ENCODE measurements at regions of chr16 and their contacts with region 1.

Region 1: DNA sequence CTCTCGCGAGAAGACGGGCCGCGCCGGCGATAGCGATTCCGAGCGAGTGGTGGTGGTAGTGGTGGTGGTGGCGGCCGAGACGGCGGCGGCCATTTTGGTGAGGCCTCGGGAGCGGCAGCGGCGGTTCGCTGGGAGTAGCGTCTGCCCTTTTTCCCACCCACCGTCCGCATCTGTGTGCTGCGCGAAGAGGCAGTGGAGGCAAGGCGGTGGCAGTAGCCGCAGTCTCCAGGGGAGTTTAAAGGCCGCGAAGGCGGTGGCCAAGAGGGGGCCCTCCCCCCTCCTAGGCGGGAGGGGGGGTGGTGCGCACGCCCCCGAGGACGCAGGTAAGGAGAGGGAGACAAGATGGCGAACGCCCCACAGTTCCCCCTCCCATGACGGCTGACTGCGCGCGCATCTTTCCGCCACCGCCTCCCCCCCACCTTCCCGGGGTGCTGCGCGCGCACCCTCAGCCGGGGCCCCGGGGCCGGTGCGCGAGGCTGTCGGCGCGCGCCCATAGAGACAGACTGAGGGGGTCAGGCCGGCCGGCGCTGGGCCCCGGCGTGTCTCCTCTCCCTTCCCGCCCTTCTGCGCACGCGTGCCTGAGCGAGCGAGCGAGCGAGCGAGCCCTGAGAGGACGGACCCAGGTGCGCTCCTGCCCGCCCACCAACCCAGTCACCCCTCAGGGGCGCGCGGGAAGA is 694 bp upstream of the SRCAP start:
- DNase-seq: peak; percentile 96
- ATAC-seq: peak; percentile 75
- H3K4me3 Mint-ChIP-seq: peak overlapping the region; percentile 97
- H3K27ac Mint-ChIP-seq: peak overlapping the region; percentile 100
- H3K4me1 Mint-ChIP-seq: peaks cover 30% of the 10 kb centered on the region
- H3K27me3 Mint-ChIP-seq: no peaks in the 10 kb centered on the region
- CTCF ChIP-seq: no peak

Region 2: GRCh38 chr16:30407102-30407803 is 291.0 kb before region 1 on chr16 and contains the start of gene ZNF771:
- CTCF ChIA-PET with region 1: no interaction called
- POLR2A ChIA-PET with region 1: interaction called, 5 read pairs
- intact Hi-C with region 1: loop called (anchors 1 kb)
- DNase-seq: peak; percentile 90
- ATAC-seq: peak; percentile 89
- H3K4me3 Mint-ChIP-seq: peak within 1 kb of the TSS; percentile 89
- H3K27ac Mint-ChIP-seq: peak within 1 kb of the TSS; percentile 90
- H3K4me1 Mint-ChIP-seq: peaks cover 27% of the 10 kb centered on the region
- H3K27me3 Mint-ChIP-seq: no peaks in the 10 kb centered on the region
- CTCF ChIP-seq: no peak
- total RNA-seq, gene ZNF771: 4.4 and 5.2 TPM in 2 replicates

Region 3: GRCh38 chr16:30628627-30629540 is 69.4 kb before region 1 on chr16:
- CTCF ChIA-PET with region 1: interaction called, 8 read pairs
- POLR2A ChIA-PET with region 1: interaction called, 17 read pairs
- intact Hi-C with region 1: loop called (anchors 1 kb)
- DNase-seq: peak; percentile 84
- ATAC-seq: peak; percentile 93
- H3K4me3 Mint-ChIP-seq: peak overlapping the region; percentile 69
- H3K27ac Mint-ChIP-seq: peak overlapping the region; percentile 76
- H3K4me1 Mint-ChIP-seq: peaks cover 6% of the 10 kb centered on the region
- H3K27me3 Mint-ChIP-seq: no peaks in the 10 kb centered on the region
- CTCF ChIP-seq: peak; percentile 70

Region 4: GRCh38 chr16:30715737-30716445 is 17.6 kb after region 1 on chr16:
- CTCF ChIA-PET with region 1: no interaction called
- POLR2A ChIA-PET with region 1: interaction called, 5 read pairs
- intact Hi-C with region 1: loop called (anchors 1 kb)
- DNase-seq: no peak
- ATAC-seq: peak; percentile 99
- H3K4me3 Mint-ChIP-seq: peak overlapping the region; percentile 50
- H3K27ac Mint-ChIP-seq: peak overlapping the region; percentile 91
- H3K4me1 Mint-ChIP-seq: peaks cover 26% of the 10 kb centered on the region
- H3K27me3 Mint-ChIP-seq: no peaks in the 10 kb centered on the region
- CTCF ChIP-seq: no peak

Region 5: DNA sequence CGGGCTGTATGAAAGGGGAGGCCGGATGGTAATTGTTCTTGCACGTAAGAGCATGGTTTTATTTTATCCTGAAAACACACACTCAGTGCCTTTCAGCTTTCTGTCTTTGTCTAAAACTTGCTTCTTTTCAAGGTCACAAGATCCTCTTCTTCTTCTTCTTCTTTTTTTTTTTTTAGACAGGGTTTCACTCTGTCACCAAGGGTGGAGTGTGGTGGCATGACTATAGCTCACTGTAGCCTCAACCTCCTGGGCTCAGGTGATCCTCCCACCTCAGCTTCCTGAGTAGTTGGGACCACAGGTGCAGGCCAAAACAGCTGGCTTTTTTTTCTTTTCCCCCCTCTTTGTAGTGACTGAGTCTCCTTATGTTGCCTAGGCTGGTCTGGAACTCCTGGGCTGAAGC is 104.7 kb after region 1 on chr16:
- CTCF ChIA-PET with region 1: no interaction called
- POLR2A ChIA-PET with region 1: no interaction called
- intact Hi-C with region 1: no loop called
- DNase-seq: no peak
- ATAC-seq: no peak
- H3K4me3 Mint-ChIP-seq: no peak overlapping the region
- H3K27ac Mint-ChIP-seq: no peak overlapping the region
- H3K4me1 Mint-ChIP-seq: peaks cover 20% of the 10 kb centered on the region
- H3K27me3 Mint-ChIP-seq: no peaks in the 10 kb centered on the region
- CTCF ChIP-seq: no peak

Region 6: DNA sequence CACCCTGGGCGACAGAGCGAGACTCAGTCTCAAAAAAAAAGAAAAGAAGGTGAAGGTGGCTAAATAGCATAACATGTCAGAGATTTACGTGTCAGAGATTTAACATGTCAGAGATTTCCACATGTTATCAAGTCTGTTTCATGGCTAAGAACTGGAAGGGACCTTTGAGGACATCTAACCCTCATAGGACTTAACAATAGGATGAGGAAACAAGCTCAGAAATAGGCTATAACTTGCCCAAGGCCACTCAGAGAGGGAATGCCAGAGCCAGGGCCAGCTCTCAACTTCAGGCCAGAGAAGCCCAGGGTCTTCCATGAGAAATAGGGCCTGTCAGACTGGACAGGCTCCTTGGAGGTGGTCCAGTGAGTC is 115.5 kb after region 1 on chr16:
- CTCF ChIA-PET with region 1: no interaction called
- POLR2A ChIA-PET with region 1: interaction called, 5 read pairs
- intact Hi-C with region 1: loop called (anchors 10 kb)
- DNase-seq: no peak
- ATAC-seq: no peak
- H3K4me3 Mint-ChIP-seq: peak overlapping the region; percentile 84
- H3K27ac Mint-ChIP-seq: peak overlapping the region; percentile 75
- H3K4me1 Mint-ChIP-seq: peaks cover 13% of the 10 kb centered on the region
- H3K27me3 Mint-ChIP-seq: no peaks in the 10 kb centered on the region
- CTCF ChIP-seq: no peak

Measured in activated B cell treated with CpG ODN at 0.5 μM for 24 hours (primary cell).